ENCODE measurements at regions of chr6 and their contacts with region 1.

Region 1: DNA sequence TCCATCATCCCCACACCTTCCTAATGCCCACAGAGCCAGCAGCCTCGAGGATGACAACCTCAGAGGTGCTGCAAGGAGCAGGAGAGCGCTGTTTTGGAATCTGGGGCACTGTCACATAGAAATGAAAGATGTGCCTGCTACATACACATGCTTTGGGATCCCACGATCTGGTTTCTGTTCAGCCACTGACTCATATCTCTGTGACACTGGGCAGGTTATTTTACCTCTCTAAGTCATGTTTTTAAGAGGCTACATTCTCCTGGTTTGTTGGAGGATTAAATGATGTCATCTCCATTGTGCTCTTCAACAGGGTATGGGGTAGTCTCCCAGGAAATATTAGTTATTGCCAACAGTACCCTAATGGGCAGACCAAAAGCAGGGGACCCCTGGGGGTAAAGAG is 32.6 kb upstream of the TAB2 start:
- DNase-seq: no peak
- H3K4me3 ChIP-seq: no peak overlapping the region
- H3K27ac ChIP-seq: no peak overlapping the region
- H3K4me1 ChIP-seq: no peaks in the 10 kb centered on the region
- H3K27me3 ChIP-seq: no peaks in the 10 kb centered on the region
- CTCF ChIP-seq: no peak

Region 2: DNA sequence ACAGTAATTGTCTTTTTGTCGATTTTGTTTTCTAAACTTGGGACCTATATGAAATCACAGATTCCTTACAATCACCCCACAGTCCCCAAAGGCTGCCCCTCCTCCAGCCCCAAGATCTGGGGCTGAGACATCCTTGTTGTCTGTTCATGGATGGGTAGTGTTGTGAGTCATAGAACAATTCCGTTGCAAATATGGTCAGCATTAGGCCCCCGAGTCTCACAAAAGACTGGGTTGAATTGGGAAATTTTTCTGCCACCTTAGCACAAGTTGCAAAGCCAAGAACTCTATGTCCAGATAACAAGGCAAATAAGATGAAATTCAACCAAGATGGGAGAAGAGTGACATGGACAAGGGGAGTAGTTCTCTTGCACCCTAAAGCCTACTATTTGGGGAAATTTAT is 22.1 kb after region 1 on chr6:
- CTCF ChIA-PET with region 1: no interaction called
- POLR2A ChIA-PET with region 1: interaction called, 10 read pairs
- intact Hi-C with region 1: no loop called
- DNase-seq: no peak
- H3K4me3 ChIP-seq: no peak overlapping the region
- H3K27ac ChIP-seq: no peak overlapping the region
- H3K4me1 ChIP-seq: no peaks in the 10 kb centered on the region
- H3K27me3 ChIP-seq: no peaks in the 10 kb centered on the region
- CTCF ChIP-seq: no peak